CD8-positive, alpha-beta T cell (primary cell): ENCODE measurements at regions of chr12 and their contacts with region 1.

Region 1: DNA sequence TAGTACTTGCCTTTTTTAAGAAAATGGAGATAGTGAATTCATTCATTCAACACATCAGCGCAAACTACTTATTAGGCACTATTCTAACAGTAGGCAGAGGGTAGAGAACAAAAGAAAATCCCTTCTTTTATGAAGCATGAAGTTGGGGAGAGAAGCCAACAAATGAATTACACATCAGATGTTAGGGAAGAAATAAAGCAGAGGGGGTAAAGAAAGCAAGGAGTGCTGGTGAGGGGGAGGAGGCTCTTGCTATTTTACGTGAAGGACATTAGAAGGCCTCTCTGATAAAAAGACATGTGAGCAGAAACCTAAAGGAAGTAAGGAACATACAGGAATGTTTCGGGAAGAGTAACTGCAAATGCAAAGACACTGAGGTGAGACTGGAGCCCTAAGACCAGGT is 22.2 kb downstream of the TFCP2 start:
- DNase-seq: no peak
- ATAC-seq: no peak
- H3K4me3 ChIP-seq: no peak overlapping the region
- H3K4me3 Mint-ChIP-seq: no peak overlapping the region
- H3K27ac ChIP-seq: no peak overlapping the region
- H3K27ac Mint-ChIP-seq: no peak overlapping the region
- H3K4me1 ChIP-seq: no peaks in the 10 kb centered on the region
- H3K4me1 Mint-ChIP-seq: peaks cover 49% of the 10 kb centered on the region
- H3K27me3 ChIP-seq: no peaks in the 10 kb centered on the region
- H3K27me3 Mint-ChIP-seq: no peaks in the 10 kb centered on the region
- CTCF ChIP-seq: no peak

Region 2: DNA sequence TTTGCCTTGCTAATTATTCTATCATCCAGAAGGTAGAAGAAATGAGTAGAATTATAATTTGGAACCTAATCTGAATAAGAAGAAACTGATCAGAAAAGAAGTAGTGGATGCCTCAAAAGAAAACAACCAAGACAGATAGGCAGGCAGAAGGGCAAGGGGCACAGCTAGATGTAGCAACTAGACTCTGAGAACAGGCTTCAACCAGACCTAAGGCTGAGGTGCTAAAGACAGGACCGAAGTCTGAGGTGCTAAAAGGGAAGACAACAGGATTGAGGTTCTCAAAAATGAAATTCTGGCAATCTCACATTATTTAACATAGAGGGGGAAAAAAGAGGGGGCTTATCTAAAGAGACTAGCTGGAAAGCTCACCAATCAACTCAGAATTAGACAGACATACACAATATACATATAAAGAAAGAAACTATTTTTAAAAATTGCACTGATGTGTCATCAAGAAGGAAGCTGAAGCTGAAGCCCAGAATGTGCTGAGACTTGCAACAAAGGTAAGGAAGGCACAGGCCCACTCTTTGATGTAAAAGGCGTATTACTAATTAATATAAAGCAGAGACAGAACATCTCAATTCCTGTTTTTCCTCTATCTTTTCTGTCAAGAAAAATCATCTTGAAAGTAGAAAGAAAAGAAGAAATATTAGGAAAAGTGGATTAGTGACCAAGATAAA is 23.6 kb before region 1 on chr12:
- CTCF ChIA-PET with region 1: no interaction called
- POLR2A ChIA-PET with region 1: interaction called, 9 read pairs
- intact Hi-C with region 1: loop called in 1 of 2 experiments (anchors 1 kb)
- DNase-seq: no peak
- ATAC-seq: no peak
- H3K4me3 ChIP-seq: no peak overlapping the region
- H3K4me3 Mint-ChIP-seq: no peak overlapping the region
- H3K27ac ChIP-seq: no peak overlapping the region
- H3K27ac Mint-ChIP-seq: peak overlapping the region; percentile 19
- H3K4me1 ChIP-seq: no peaks in the 10 kb centered on the region
- H3K4me1 Mint-ChIP-seq: peaks cover 3% of the 10 kb centered on the region
- H3K27me3 ChIP-seq: no peaks in the 10 kb centered on the region
- H3K27me3 Mint-ChIP-seq: no peaks in the 10 kb centered on the region
- CTCF ChIP-seq: no peak

Region 3: GRCh38 chr12:51307655-51308593 is 157.1 kb after region 1 on chr12:
- CTCF ChIA-PET with region 1: no interaction called
- POLR2A ChIA-PET with region 1: no interaction called
- intact Hi-C with region 1: no loop called
- DNase-seq: peak in 2 of 9 experiments; percentile 21 to 49
- ATAC-seq: peak; percentile 73
- H3K4me3 ChIP-seq: no peak overlapping the region
- H3K4me3 Mint-ChIP-seq: no peak overlapping the region
- H3K27ac ChIP-seq: peak overlapping the region; percentile 34 to 56
- H3K27ac Mint-ChIP-seq: peak overlapping the region; percentile 80
- H3K4me1 ChIP-seq: peaks cover 54% of the 10 kb centered on the region
- H3K4me1 Mint-ChIP-seq: peaks cover 74% of the 10 kb centered on the region
- H3K27me3 ChIP-seq: no peaks in the 10 kb centered on the region
- H3K27me3 Mint-ChIP-seq: no peaks in the 10 kb centered on the region
- CTCF ChIP-seq: no peak